ENCODE measurements at regions of chr2 and their contacts with region 1.

Region 1: GRCh38 chr2:33822964-33823363 is 223.9 kb upstream of the FAM98A start:
- DNase-seq: no peak
- H3K4me3 ChIP-seq: no peak overlapping the region
- H3K27ac ChIP-seq: no peak overlapping the region
- H3K4me1 ChIP-seq: no peaks in the 10 kb centered on the region
- H3K27me3 ChIP-seq: no peaks in the 10 kb centered on the region
- CTCF ChIP-seq: no peak

Region 2: GRCh38 chr2:33510586-33510968 is 312.4 kb before region 1 on chr2:
- CTCF ChIA-PET with region 1: no interaction called
- POLR2A ChIA-PET with region 1: no interaction called
- intact Hi-C with region 1: no loop called
- DNase-seq: no peak
- H3K4me3 ChIP-seq: no peak overlapping the region
- H3K27ac ChIP-seq: no peak overlapping the region
- H3K4me1 ChIP-seq: no peaks in the 10 kb centered on the region
- H3K27me3 ChIP-seq: no peaks in the 10 kb centered on the region
- CTCF ChIP-seq: no peak

Region 3: DNA sequence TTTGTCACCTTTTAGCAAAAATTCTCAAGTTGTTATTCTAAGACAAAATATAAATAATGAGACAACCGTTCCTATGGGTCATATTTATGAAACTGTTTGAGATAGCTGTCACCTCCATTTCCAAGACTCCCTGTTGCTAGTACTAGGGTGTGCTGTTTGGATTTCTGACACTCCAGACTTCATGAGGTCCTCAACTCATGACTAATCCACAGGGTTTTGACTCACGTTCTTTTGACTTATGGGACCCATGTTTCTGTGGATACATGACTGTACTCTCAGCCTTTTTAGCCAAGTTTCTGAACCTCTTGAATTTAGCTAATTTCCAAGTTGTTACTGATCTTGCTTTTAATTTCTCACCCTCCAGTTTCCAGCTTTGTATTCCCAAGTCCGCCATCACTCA is 45.2 kb before region 1 on chr2:
- CTCF ChIA-PET with region 1: no interaction called
- POLR2A ChIA-PET with region 1: no interaction called
- intact Hi-C with region 1: loop called (anchors 2 kb)
- DNase-seq: no peak
- H3K4me3 ChIP-seq: no peak overlapping the region
- H3K27ac ChIP-seq: no peak overlapping the region
- H3K4me1 ChIP-seq: no peaks in the 10 kb centered on the region
- H3K27me3 ChIP-seq: peaks cover 14% of the 10 kb centered on the region
- CTCF ChIP-seq: no peak

Region 4: DNA sequence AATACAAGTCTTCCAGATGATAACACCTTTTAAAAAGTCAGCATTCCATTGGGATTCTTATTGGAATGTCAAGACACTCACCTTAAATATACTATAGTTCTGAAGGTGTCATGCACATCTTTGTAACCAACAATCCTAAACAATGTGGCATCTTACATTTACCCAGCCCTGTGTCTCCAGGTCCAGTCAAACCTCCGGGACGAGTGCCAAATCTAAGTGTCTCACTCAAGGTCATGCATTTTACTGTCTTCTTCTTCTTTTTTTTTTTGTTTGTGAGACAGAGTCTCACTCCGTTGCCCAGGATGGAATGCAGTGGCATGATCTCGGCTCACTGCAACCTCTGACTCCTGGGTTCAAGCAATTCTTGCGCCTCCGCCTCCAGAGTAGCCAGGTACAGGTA is 16.9 kb before region 1 on chr2:
- CTCF ChIA-PET with region 1: interaction called, 17 read pairs
- POLR2A ChIA-PET with region 1: no interaction called
- intact Hi-C with region 1: no loop called
- DNase-seq: no peak
- H3K4me3 ChIP-seq: no peak overlapping the region
- H3K27ac ChIP-seq: no peak overlapping the region
- H3K4me1 ChIP-seq: no peaks in the 10 kb centered on the region
- H3K27me3 ChIP-seq: peaks cover 16% of the 10 kb centered on the region
- CTCF ChIP-seq: no peak

Region 5: DNA sequence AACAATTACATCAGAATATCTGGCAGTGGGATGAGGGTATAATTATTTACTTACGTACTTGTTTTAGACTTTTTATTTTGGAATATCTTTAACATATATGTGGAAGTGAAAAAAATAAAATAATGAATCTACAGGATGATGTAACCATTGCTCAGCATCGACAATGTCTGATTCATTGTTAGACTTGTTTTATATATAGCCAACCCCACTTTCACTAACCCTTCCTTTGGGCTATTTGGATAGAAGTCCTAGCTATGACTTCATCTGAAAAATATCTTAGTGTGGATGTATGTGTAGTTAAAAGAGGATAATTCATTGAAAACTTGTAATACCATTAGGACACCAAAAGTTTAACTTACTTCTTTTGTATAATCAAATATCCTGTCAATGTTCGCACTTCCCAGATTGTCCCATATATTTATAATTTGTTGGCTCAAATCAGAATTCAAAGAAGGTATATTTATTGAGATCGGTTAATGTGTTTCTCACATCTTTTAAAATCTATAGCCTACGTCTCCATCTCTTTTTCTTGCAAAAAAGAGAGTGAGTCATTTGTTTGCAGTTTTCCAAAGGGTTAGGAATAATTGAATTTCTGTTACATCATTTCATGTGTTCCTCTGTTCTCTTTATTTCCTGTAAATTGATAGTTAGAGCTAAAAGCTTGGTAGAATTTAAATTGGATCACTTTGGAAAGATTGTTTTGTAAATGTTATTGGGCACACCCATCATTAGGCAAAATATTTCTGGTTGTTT is 282.2 kb after region 1 on chr2:
- CTCF ChIA-PET with region 1: no interaction called
- POLR2A ChIA-PET with region 1: no interaction called
- intact Hi-C with region 1: no loop called
- DNase-seq: peak in 1 of 2 experiments; percentile 42
- H3K4me3 ChIP-seq: no peak overlapping the region
- H3K27ac ChIP-seq: peak overlapping the region; percentile 71
- H3K4me1 ChIP-seq: peaks cover 19% of the 10 kb centered on the region
- H3K27me3 ChIP-seq: no peaks in the 10 kb centered on the region
- CTCF ChIP-seq: no peak